Posterior vena cava (tissue), 2 donors: ENCODE measurements at regions of chr18 and their contacts with region 1.

Region 1: GRCh38 chr18:21949326-21950015 is 208.9 kb downstream of the MIB1 start:
- DNase-seq: no peak

Region 2: GRCh38 chr18:21914739-21915319 is 34.6 kb before region 1 on chr18:
- intact Hi-C with region 1: loop called in 1 of 2 experiments (anchors 1 kb)
- DNase-seq: no peak